Activated naive CD4-positive, alpha-beta T cell treated with anti-CD3 and anti-CD28 coated beads for 36 hours (primary cell): ENCODE measurements at regions of chr19 and their contacts with region 1.

Region 1: DNA sequence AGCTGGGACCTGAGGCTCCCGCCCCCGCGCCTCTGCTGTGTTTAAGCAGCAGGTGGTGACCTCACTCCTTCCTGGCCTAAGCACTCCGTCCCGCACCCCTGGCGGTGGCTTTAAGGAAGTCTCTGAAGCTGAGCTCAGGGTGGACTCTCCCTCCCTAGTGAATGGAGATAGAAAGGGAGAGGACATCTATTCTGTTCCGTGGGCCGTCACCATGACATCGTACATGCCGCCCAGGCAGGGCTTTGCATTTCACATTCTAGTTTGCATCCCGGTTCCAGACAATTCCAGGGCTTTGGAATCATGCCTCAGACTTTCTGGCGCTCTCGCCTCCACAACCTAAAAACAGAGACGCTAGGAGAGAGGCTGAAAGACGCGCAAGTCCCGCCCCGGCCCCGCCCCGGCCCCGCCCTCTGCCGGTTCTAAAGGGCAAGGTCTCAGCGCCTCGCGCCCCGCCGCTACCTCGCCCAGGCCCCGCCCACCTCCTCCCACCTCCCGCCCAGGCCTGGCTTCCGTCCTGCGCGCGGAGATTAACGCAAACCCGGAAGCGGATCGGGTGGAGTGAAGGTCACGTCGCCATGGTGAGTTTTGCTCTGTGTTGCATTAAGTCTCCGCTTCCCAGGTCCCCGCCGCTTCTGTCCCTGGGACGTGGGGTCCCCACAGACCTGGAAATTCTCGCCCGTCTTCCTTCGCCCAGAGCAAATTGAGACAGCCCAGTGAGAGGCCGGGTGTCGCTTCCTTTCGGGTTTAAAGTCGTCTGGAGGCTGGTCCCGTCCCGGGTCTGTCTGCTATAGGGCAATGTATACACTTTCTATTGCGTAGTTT is at the start of gene ZNF808:
- DNase-seq: peak; percentile 98
- H3K4me3 Mint-ChIP-seq: peak within 1 kb of the TSS; percentile 97
- H3K27ac Mint-ChIP-seq: peak within 1 kb of the TSS; percentile 95
- H3K4me1 Mint-ChIP-seq: peaks cover 17% of the 10 kb centered on the region
- H3K27me3 Mint-ChIP-seq: no peaks in the 10 kb centered on the region
- total RNA-seq, gene ZNF808: 19.1 to 20.1 TPM

Region 2: DNA sequence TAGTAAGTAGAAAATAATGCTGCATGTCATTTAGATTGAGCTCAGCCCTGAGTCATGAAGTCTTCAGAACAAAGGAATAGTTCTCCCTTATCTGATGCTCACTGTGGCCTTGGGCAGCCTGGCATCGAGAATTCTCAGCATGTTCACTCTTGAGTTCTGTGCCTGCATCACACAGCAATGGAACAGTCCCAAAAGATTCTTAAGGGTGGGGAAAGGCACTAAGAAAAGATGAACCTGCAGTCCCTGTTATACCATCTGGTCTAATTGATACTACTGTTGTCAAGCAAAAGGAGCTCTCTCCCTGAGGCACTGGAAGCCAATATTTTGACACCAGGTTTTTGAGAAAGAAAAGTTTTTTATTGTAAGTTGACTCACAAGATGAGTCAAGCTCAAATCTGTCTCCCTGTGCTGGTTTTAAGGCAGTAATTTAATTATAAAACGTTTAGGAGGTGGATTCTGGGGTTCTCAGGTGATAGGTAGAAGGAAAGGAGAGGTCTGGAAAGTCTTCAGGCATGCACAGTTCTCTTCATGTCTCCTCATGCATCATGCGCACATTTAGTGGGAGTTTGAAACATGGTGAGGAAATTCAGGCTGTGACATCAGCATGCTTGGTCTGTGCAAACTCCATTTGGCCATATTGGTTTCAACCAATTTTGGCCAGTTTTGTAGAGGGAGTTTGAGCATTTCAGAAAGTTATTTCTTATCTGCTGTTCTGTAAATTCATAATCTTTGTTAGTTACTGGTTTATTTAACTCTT is 296.0 kb before region 1 on chr19:
- CTCF ChIA-PET with region 1: no interaction called
- intact Hi-C with region 1: no loop called
- DNase-seq: no peak
- H3K4me3 Mint-ChIP-seq: no peak overlapping the region
- H3K27ac Mint-ChIP-seq: peak overlapping the region; percentile 59
- H3K4me1 Mint-ChIP-seq: peaks cover 23% of the 10 kb centered on the region
- H3K27me3 Mint-ChIP-seq: no peaks in the 10 kb centered on the region

Region 3: DNA sequence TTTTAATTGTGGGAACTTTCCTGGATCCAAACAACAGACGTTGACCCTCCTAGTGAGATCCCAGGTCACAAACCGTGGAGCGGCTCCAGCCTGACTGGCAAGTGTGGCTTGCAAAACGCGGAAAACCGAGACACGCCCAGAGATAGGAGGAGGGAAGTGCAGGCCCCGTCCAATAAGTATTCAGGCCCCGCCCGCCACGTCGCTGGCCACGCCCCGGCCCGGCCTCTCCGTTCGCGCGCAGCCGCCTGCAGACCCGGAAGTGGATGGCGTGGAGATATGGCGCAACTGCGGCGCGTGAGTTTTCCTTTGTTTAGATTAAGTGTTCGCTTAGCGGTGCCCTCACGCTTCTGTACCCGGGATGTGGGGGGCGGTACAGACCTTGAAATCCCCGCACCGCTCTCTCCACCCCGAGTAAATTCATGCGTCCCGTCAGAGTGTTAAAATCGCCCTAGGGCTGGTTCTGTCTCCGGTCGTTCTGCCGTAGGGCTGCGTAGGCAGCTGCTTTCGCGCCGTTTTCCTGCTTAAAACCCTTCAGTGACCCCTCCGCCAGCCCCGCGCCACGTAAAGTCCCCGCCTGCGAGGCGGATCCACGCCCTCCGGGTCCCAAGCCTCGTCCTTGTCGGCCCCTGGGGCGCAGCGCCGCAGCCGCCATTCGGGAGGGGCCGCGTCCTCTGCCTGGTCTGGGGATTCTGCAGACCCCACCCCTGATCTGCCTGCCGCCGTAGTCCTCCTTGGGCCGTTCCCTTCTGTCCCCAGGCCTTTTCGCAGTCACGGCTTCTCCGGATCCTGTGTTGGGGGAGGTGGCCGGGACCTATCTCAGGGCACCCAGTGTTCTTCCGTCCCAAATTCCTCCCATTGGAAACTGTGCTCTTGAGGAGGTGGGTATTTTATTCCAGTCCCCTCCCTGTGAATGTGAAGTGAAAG is 257.7 kb before region 1 on chr19 and contains the start of gene ZNF766:
- CTCF ChIA-PET with region 1: no interaction called
- intact Hi-C with region 1: loop called (anchors 5 kb)
- DNase-seq: peak; percentile 98
- H3K4me3 Mint-ChIP-seq: peak within 1 kb of the TSS; percentile 96
- H3K27ac Mint-ChIP-seq: peak within 1 kb of the TSS; percentile 91
- H3K4me1 Mint-ChIP-seq: peaks cover 27% of the 10 kb centered on the region
- H3K27me3 Mint-ChIP-seq: no peaks in the 10 kb centered on the region
- total RNA-seq, gene ZNF766: 22.3 to 23.6 TPM

Region 4: DNA sequence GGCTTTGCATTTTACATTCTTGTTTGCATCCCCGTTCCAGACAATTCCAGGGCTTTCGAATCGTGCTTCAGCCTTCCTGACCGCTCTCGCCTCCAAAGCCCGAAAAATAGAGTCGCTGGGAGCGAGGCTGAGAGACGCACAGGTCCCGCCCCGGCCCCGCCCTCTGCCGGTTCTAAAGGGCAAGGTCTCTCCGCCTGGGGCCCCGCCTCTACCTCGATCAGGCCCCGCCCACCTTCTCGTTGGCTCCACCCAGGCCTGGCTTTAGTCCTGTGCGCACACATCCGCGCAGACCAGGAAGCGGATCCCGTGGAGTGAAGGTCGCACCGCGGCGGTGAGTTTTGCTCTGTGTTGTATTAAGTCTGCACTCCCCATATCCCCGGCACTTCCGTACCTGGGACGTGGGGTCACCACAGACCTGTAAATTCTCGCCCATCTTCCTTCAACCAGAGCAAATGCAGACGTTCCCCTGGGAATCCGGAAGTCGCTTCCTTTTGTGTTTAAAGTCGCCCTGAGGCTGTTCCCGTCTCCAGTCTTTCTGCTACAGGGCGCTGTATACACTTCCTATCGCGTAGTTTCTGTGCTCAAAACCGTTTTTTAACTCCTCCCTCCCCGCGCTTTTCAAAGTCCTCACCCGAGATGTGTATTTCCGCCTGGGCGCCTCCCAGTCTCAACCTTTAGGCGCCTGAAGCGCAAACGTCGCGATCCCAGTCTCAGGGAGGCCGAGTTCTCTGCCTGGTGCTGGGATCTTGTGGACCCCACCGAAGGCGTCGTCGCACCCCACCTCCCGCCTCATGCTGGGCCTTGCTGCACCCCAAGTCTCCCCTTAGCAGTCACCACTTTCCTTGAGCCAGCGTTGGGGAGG is 42.9 kb after region 1 on chr19 and contains the start of gene ZNF701:
- CTCF ChIA-PET with region 1: interaction called, 3 read pairs
- intact Hi-C with region 1: loop called (anchors 1 kb)
- DNase-seq: peak; percentile 97
- H3K4me3 Mint-ChIP-seq: peak within 1 kb of the TSS; percentile 92
- H3K27ac Mint-ChIP-seq: peak within 1 kb of the TSS; percentile 93
- H3K4me1 Mint-ChIP-seq: peaks cover 31% of the 10 kb centered on the region
- H3K27me3 Mint-ChIP-seq: no peaks in the 10 kb centered on the region
- total RNA-seq, gene ZNF701: 13.8 to 15.0 TPM

Region 5: GRCh38 chr19:52637718-52638585 is 110.6 kb after region 1 on chr19 and contains the start of gene ZNF83:
- CTCF ChIA-PET with region 1: no interaction called
- intact Hi-C with region 1: loop called (anchors 1 kb)
- DNase-seq: peak; percentile 96
- H3K4me3 Mint-ChIP-seq: peak within 1 kb of the TSS; percentile 85
- H3K27ac Mint-ChIP-seq: peak within 1 kb of the TSS; percentile 92
- H3K4me1 Mint-ChIP-seq: peaks cover 9% of the 10 kb centered on the region
- H3K27me3 Mint-ChIP-seq: no peaks in the 10 kb centered on the region
- total RNA-seq, gene ZNF83: 23.3 to 23.9 TPM

Region 6: GRCh38 chr19:52742516-52742915 is 215.2 kb after region 1 on chr19:
- CTCF ChIA-PET with region 1: no interaction called
- intact Hi-C with region 1: loop called (anchors 2 kb)
- DNase-seq: no peak
- H3K4me3 Mint-ChIP-seq: no peak overlapping the region
- H3K27ac Mint-ChIP-seq: no peak overlapping the region
- H3K4me1 Mint-ChIP-seq: peaks cover 14% of the 10 kb centered on the region
- H3K27me3 Mint-ChIP-seq: no peaks in the 10 kb centered on the region